ENCODE measurements at regions of chr7 and their contacts with region 1.

Region 1: DNA sequence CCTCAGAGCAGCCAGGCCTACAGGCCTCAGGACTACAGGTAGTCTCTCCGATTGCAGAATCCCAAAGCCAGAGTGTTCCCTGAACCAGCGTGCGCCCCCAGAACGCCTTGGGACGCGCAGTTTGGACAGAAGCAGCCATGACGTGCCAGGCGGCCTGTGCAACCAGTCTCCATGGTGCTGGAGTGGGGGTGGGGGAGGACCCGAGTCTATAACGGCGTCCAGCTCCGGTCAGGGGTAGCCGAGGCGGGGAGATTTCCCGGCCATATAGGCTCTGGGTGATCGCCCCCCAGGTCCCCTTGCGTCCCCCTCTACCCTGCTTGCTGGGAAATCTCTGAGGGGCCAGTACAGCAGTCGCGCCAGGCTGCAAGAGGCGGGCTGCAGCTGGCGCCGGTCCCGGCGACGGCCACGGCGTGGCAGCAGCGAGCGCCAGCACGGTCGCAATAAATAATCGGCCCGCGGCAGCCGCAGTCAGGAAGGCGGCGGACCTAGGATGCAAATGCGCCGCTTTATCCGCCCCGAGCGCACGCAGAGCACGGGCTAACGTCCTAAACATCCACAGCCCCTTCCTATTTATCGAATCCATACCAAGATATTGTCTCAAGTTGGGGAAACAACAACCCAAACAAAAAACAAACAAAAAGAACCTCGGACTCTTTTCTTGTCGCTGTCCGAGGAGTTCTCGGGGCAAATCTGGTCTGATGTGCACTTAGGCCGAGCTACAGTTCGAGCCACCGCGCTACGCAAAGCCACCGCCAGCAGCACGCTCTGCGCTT is 1.6 kb downstream of the HOXA3 start:
- DNase-seq: peak; percentile 83 to 91 (median 91)
- H3K4me3 ChIP-seq: peak overlapping the region; percentile 76 to 100 (median 91)
- H3K27ac ChIP-seq: peak overlapping the region; percentile 75 to 96
- H3K4me1 ChIP-seq: peaks cover 5 to 84% (median 80%) of the 10 kb centered on the region in 4 experiments
- H3K27me3 ChIP-seq: no peaks in the 10 kb centered on the region

Region 2: GRCh38 chr7:26686448-26686981 is 464.2 kb before region 1 on chr7:
- CTCF ChIA-PET with region 1: interaction called, 16 read pairs
- POLR2A ChIA-PET with region 1: no interaction called
- DNase-seq: peak in 2 of 3 donors; percentile 69 to 79
- H3K4me3 ChIP-seq: no peak overlapping the region
- H3K27ac ChIP-seq: no peak overlapping the region
- H3K4me1 ChIP-seq: peaks cover 37 to 93% (median 60%) of the 10 kb centered on the region in 4 experiments
- H3K27me3 ChIP-seq: no peaks in the 10 kb centered on the region

Region 3: GRCh38 chr7:26714006-26714405 is 436.7 kb before region 1 on chr7:
- CTCF ChIA-PET with region 1: no interaction called
- POLR2A ChIA-PET with region 1: no interaction called
- DNase-seq: no peak
- H3K4me3 ChIP-seq: no peak overlapping the region
- H3K27ac ChIP-seq: no peak overlapping the region
- H3K4me1 ChIP-seq: peaks cover 0 to 5% (median 3%) of the 10 kb centered on the region in 4 experiments
- H3K27me3 ChIP-seq: no peaks in the 10 kb centered on the region

Region 4: DNA sequence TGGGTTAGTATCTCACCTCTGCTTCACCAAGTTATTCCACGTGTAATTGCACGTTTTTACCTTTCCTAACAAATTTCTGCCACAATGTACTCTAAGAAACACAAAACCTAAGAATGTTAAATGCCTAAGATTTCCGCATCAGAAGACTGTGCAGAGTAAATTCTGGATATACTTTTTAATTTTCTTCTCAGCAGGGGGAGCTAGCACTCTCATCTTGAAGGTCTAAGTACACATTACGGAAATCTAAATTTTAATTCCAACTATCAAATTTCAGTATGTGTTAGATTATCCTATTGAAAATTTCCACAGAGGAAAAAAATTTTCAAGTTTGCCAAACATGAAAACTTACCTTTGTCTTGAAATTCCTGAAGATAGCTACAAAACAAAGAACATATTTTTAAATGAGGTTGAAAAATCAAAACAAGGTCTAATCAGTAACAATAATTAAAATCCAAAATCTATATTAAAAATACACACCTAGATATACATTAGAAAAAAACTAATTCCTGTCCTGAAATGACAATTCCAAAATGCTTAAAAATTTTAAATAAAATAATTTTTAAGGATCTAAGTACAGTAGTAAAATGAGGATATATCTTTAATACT is 296.9 kb before region 1 on chr7:
- CTCF ChIA-PET with region 1: interaction called, 87 read pairs
- POLR2A ChIA-PET with region 1: interaction called, 4 read pairs
- DNase-seq: peak; percentile 73 to 86 (median 83)
- H3K4me3 ChIP-seq: no peak overlapping the region
- H3K27ac ChIP-seq: no peak overlapping the region
- H3K4me1 ChIP-seq: peaks cover 5 to 39% (median 27%) of the 10 kb centered on the region in 4 experiments
- H3K27me3 ChIP-seq: no peaks in the 10 kb centered on the region

Region 5: GRCh38 chr7:27130540-27131389 is 20.0 kb before region 1 on chr7 and contains the start of gene HOXA4:
- CTCF ChIA-PET with region 1: interaction called, 16 read pairs
- POLR2A ChIA-PET with region 1: interaction called, 6 read pairs
- DNase-seq: peak; percentile 84 to 90 (median 89)
- H3K4me3 ChIP-seq: peak within 1 kb of the TSS; percentile 23 to 77 (median 60)
- H3K27ac ChIP-seq: peak within 1 kb of the TSS; percentile 37 to 73
- H3K4me1 ChIP-seq: peaks cover 13 to 38% (median 17%) of the 10 kb centered on the region in 4 experiments
- H3K27me3 ChIP-seq: no peaks in the 10 kb centered on the region

Region 6: DNA sequence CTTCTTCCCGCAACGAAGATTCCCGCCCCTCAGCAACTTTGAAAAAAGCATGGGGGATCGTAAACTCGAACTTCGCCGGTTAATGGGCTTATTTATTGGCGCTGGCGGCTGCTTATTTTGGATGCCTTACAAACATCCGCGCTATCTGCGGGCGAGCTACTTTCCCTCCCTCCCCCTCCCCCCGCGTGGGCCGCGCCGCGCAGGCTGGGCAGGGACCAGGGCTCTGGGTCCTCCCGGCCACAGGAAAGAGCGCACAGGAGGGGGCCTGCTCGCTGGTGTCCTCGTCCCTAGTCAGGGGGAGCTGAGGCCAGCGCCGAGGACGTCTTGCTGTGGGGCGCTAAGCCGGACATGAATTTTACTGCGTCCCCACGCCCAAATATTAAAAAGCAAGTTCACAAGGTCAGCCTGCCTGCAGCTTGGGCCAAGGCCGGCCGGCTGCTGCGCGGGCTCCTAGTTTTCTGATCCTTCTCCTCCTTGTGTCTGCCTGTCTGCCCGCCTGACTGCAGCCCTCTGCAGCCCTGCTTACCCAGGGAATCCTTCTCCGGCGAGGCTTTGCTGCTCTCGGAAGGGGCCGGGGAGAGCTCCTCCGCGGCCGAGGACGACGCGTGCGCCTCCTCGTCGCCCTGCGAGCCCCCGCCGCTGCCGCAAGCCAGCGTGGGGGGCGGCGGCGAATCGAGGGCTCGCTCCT is 22.2 kb after region 1 on chr7:
- CTCF ChIA-PET with region 1: interaction called, 10 read pairs
- POLR2A ChIA-PET with region 1: interaction called, 9 read pairs
- DNase-seq: no peak
- H3K4me3 ChIP-seq: peak overlapping the region; percentile 78 to 100 (median 85)
- H3K27ac ChIP-seq: peak overlapping the region; percentile 92 to 96
- H3K4me1 ChIP-seq: peaks cover 4 to 48% (median 27%) of the 10 kb centered on the region in 4 experiments
- H3K27me3 ChIP-seq: peaks cover 0 to 7% (median 0%) of the 10 kb centered on the region in 5 experiments